ENCODE measurements at regions of chr22 and their contacts with region 1.

Region 1: DNA sequence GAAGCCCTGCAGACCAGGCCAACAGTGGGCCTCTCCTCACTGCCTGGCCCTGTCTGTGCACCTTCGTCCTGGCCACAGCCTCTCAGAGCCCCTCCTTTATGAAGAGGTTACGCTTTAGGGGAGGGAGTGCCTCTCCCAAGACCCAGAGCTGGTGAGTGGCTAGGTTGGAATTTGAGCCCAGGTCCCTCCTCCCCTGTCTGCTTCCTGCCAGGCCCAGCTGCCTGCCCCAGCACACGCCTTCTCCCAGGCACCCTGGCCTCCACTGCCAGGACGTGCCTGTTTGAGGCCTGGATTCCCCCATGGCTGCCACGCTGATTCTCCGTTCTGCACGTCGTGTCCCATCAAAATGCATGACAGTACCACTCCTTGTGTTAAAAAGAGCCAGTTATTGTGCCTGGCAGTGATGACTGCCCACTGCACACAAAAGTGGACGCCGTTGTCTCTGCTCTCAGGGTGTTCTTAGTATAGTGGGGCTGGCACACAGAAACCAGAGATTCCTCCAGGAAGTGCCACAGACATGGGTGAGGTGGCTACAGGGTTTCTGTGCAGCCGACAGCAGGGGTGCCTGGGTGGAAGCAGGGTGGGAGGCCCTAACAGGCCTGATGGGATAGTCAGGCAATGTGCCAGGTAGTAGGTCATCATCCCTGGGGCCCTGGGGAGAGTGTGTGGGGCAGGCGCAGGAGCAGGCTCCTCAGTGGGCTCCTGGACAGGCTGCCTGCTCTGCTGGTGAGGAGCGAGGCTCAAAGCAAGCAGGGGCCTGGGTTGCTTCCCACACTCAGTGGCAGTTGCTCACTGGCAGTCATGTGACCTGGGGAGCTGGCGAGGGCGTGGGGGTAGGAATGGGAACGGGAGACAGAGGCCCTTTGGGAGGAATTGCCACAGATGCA is 24.1 kb downstream of the MED15 start:
- DNase-seq: peak; percentile 91
- ATAC-seq: peak; percentile 88
- H3K4me3 ChIP-seq: peak overlapping the region; percentile 40; the same call in 1 of the 2 replicates
- H3K27ac ChIP-seq: peak overlapping the region; percentile 99
- H3K4me1 ChIP-seq: peaks cover 39% of the 10 kb centered on the region
- H3K27me3 ChIP-seq: no peaks in the 10 kb centered on the region
- CTCF ChIP-seq: no peak

Region 2: DNA sequence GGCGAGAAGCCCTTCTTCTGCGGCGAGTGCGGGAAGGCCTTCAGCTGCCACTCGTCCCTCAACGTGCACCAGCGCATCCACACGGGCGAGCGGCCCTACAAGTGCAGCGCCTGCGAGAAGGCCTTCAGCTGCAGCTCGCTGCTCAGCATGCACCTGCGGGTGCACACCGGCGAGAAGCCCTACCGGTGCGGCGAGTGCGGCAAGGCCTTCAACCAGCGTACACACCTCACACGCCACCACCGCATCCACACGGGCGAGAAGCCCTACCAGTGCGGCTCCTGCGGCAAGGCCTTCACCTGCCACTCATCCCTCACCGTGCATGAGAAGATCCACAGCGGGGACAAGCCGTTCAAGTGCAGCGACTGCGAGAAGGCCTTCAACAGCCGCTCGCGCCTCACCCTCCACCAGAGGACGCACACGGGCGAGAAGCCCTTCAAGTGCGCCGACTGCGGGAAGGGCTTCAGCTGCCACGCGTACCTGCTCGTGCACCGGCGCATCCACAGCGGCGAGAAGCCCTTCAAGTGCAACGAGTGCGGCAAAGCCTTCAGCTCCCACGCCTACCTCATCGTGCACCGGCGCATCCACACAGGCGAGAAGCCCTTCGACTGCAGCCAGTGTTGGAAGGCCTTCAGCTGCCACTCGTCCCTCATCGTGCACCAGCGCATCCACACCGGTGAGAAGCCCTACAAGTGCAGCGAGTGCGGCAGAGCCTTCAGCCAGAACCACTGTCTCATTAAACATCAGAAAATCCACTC is 125.5 kb before region 1 on chr22:
- CTCF ChIA-PET with region 1: no interaction called
- POLR2A ChIA-PET with region 1: no interaction called
- intact Hi-C with region 1: no loop called
- DNase-seq: no peak
- ATAC-seq: no peak
- H3K4me3 ChIP-seq: no peak overlapping the region
- H3K27ac ChIP-seq: no peak overlapping the region
- H3K4me1 ChIP-seq: no peaks in the 10 kb centered on the region
- H3K27me3 ChIP-seq: no peaks in the 10 kb centered on the region
- CTCF ChIP-seq: no peak

Region 3: GRCh38 chr22:20495861-20496681 is 35.5 kb before region 1 on chr22:
- CTCF ChIA-PET with region 1: no interaction called
- POLR2A ChIA-PET with region 1: interaction called, 14 read pairs
- intact Hi-C with region 1: loop called (anchors 5 kb)
- DNase-seq: peak; percentile 79
- ATAC-seq: peak; percentile 83
- H3K4me3 ChIP-seq: peak overlapping the region; percentile 74
- H3K27ac ChIP-seq: peak overlapping the region; percentile 80
- H3K4me1 ChIP-seq: peaks cover 25% of the 10 kb centered on the region
- H3K27me3 ChIP-seq: no peaks in the 10 kb centered on the region
- CTCF ChIP-seq: peak; percentile 84

Region 4: GRCh38 chr22:20514658-20515406 is 16.7 kb before region 1 on chr22:
- CTCF ChIA-PET with region 1: no interaction called
- POLR2A ChIA-PET with region 1: interaction called, 5 read pairs
- intact Hi-C with region 1: loop called (anchors 2 kb)
- DNase-seq: peak; percentile 88
- ATAC-seq: peak; percentile 95
- H3K4me3 ChIP-seq: no peak overlapping the region
- H3K27ac ChIP-seq: peak overlapping the region; percentile 91
- H3K4me1 ChIP-seq: peaks cover 37% of the 10 kb centered on the region
- H3K27me3 ChIP-seq: no peaks in the 10 kb centered on the region
- CTCF ChIP-seq: no peak

Region 5: DNA sequence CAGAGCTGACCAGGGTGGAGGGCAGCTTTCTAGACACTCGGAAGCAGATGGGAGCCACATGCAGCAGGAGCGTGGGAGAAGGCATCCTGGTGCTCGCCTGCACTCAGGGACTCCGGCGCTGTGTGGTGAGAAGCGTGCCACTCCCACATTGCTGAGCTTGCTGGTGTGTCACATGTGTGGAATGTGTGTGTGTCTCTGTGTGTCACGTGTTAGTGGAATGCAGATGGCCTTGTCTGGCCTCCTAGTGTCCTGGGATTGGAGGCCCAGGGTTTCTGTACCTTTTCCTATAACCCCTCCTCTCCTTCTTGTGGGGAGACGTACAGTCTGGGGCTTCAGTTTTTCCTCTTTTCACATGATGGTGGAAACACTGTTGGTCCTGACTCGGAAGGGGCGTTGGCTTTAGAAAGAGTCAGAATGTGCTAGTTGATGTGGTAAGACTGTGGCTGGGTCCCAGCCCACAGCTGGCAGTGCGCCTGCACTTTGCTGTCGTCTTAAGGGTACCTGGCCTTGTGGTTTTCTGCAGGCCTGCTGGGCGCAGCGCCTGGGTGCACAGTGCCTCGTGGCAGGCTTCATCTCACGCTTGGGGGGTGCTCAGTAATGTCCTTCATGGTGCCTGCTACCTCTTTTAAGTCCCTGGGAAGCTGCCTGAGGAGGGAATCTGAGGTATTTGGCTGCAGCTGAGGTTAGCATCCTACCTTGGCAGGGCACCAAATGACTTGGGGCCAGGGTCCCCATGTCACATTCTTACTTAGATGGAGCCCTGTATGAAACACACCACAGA is 37.6 kb after region 1 on chr22:
- CTCF ChIA-PET with region 1: interaction called, 14 read pairs
- POLR2A ChIA-PET with region 1: no interaction called
- intact Hi-C with region 1: no loop called
- DNase-seq: peak; percentile 90
- ATAC-seq: peak; percentile 73
- H3K4me3 ChIP-seq: no peak overlapping the region
- H3K27ac ChIP-seq: peak overlapping the region; percentile 89
- H3K4me1 ChIP-seq: peaks cover 61% of the 10 kb centered on the region
- H3K27me3 ChIP-seq: no peaks in the 10 kb centered on the region
- CTCF ChIP-seq: no peak

Measured in PC-3 (cell line).